ENCODE measurements at regions of chr3 and their contacts with region 1.

Region 1: DNA sequence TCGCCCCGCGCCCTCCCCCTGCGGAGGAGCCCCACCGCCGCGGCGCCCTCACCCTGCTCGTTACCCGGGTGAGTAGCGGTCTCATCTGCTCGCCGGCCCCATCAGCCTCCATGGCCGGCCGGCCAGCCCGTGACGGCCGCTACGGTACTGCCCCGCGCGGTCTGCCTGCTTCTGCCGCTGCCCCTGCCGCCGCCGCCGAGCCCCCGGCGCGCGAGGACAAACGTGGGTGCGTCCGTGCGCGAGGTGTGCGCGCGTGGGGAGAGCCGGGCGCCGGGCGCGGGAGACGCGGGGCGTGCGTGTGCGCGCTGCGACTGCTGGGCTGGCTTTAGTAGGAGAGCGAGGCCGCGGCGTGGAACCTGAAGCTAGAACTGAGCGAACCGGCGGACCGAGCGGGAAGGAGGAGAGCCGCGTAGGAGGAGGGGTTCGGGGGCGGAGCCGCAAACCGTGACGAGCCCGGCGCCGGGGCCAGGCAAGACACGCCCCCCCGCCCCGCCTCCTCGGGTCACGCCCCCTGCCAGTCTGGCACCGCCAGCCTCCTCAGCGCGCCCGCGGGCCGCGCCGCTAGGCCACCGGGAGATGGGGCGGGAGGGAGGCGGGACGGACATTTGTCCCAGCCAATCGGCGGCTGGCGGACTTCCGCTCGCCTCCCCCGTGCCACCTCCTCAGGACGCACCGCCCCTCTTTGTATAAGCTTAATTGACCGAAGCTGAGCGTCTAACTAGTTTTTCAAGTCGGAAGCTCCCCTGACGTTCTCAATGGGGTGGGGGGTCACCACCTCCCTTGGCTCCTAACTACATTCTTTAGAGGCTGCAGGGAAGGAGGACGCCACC is at the start of gene SLC4A7:
- DNase-seq: peak; percentile 99
- ATAC-seq: peak; percentile 89
- H3K4me3 Mint-ChIP-seq: peak within 1 kb of the TSS; percentile 99
- H3K27ac Mint-ChIP-seq: peak within 1 kb of the TSS; percentile 97
- H3K4me1 Mint-ChIP-seq: peaks cover 42% of the 10 kb centered on the region
- H3K27me3 Mint-ChIP-seq: no peaks in the 10 kb centered on the region
- CTCF ChIP-seq: no peak
- total RNA-seq, gene SLC4A7: 24.3 and 31.3 TPM in 2 replicates

Region 2: GRCh38 chr3:27302891-27303290 is 181.3 kb before region 1 on chr3:
- CTCF ChIA-PET with region 1: no interaction called
- POLR2A ChIA-PET with region 1: no interaction called
- intact Hi-C with region 1: no loop called
- DNase-seq: no peak
- ATAC-seq: no peak
- H3K4me3 Mint-ChIP-seq: no peak overlapping the region
- H3K27ac Mint-ChIP-seq: no peak overlapping the region
- H3K4me1 Mint-ChIP-seq: no peaks in the 10 kb centered on the region
- H3K27me3 Mint-ChIP-seq: no peaks in the 10 kb centered on the region
- CTCF ChIP-seq: no peak

Region 3: DNA sequence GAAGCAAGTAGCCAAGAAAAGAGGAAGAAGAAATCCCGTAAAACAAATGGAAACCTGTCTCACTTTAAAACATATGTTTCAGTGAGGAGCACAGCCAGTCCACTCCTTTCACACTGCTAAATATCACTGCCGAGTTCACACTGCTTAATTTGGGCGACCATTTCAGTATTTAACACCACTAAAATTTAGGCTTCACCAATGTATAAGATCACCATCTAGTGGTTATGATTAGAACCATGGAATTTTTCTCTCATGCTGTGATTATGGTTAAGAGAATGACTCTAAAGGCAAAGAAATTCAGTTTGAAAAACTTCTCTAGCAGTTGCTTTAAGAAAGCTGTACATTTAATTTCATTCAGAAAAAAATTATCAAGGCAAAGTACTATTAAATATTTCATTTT is 16.7 kb before region 1 on chr3:
- CTCF ChIA-PET with region 1: interaction called, 7 read pairs
- POLR2A ChIA-PET with region 1: interaction called, 7 read pairs
- intact Hi-C with region 1: loop called (anchors 1 kb)
- DNase-seq: no peak
- ATAC-seq: peak; percentile 88
- H3K4me3 Mint-ChIP-seq: no peak overlapping the region
- H3K27ac Mint-ChIP-seq: no peak overlapping the region
- H3K4me1 Mint-ChIP-seq: peaks cover 22% of the 10 kb centered on the region
- H3K27me3 Mint-ChIP-seq: no peaks in the 10 kb centered on the region
- CTCF ChIP-seq: no peak

Region 4: GRCh38 chr3:27503526-27503925 is 19.3 kb after region 1 on chr3:
- CTCF ChIA-PET with region 1: no interaction called
- POLR2A ChIA-PET with region 1: no interaction called
- intact Hi-C with region 1: no loop called
- DNase-seq: no peak
- ATAC-seq: no peak
- H3K4me3 Mint-ChIP-seq: no peak overlapping the region
- H3K27ac Mint-ChIP-seq: no peak overlapping the region
- H3K4me1 Mint-ChIP-seq: no peaks in the 10 kb centered on the region
- H3K27me3 Mint-ChIP-seq: no peaks in the 10 kb centered on the region
- CTCF ChIP-seq: no peak

Region 5: GRCh38 chr3:27528791-27529190 is 44.6 kb after region 1 on chr3:
- CTCF ChIA-PET with region 1: no interaction called
- POLR2A ChIA-PET with region 1: no interaction called
- intact Hi-C with region 1: no loop called
- DNase-seq: no peak
- ATAC-seq: no peak
- H3K4me3 Mint-ChIP-seq: no peak overlapping the region
- H3K27ac Mint-ChIP-seq: no peak overlapping the region
- H3K4me1 Mint-ChIP-seq: peaks cover 11% of the 10 kb centered on the region
- H3K27me3 Mint-ChIP-seq: no peaks in the 10 kb centered on the region
- CTCF ChIP-seq: no peak

Region 6: DNA sequence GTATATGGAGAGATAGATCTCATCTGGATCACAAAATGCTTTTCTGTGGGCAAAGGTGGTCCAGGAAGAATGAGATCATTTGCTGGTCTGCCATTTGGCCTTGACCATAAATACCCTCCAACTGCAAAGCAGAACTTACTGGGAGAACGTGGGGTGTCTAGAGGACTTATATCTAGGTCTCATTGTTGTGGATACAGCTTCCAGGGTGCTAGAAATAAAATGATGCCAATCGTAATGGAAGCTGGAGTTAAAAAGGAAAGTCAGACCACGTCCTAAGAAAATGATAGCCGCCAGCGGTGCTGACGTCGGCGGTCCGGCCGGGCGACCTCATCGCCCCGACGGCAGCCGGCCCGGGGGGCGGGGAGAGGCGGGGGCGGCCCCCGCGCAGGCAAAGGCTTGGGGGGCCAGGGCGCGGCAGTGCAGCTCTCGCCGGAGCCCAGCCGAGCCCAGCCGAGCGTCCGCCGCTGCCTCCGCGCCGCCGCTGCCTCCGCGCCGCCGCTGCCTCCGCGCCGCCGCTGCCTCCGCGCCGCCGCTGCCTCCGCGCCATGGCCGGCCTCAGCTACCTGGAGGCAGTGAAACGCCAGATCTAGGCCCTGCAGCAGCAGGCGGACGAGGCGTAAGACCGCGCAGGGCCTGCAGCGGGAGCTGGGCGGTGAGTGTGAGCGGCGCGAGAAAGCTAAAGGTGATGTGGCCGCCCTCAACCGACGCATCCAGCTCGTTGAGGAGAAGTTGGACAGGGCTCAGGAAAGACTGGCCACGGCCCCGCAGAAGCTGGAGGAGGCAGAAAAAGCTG is 148.4 kb after region 1 on chr3:
- CTCF ChIA-PET with region 1: no interaction called
- POLR2A ChIA-PET with region 1: interaction called, 3 read pairs
- intact Hi-C with region 1: loop called (anchors 2 kb)
- DNase-seq: peak; percentile 46
- ATAC-seq: peak; percentile 82
- H3K4me3 Mint-ChIP-seq: peak overlapping the region; percentile 90
- H3K27ac Mint-ChIP-seq: peak overlapping the region; percentile 78
- H3K4me1 Mint-ChIP-seq: peaks cover 17% of the 10 kb centered on the region
- H3K27me3 Mint-ChIP-seq: no peaks in the 10 kb centered on the region
- CTCF ChIP-seq: no peak

Region 7: DNA sequence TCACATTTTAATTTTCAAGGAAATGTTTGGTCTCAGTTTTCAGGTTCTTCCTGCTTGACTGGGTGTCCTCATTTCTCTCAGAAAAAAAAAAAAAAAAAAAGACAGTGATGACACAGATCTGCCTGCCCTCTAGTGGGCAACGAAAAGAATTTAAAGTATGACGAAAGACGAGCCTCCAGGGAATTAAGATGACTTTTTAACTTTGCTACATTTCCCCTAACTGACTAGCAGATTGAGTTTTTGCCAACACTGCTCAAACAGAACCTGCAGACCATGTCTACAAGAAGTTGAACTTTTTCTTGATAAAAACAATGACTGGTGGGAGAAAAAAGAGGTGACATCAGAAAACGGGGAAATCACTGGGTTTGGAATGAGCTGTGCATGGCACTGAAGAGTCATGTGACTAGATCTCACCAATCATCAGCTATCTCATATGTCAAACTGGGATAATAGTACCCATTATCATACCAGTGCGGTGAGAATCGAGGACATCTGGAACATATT is 197.1 kb after region 1 on chr3:
- CTCF ChIA-PET with region 1: no interaction called
- POLR2A ChIA-PET with region 1: no interaction called
- intact Hi-C with region 1: loop called (anchors 1 kb)
- DNase-seq: no peak
- ATAC-seq: peak; percentile 85
- H3K4me3 Mint-ChIP-seq: peak overlapping the region; percentile 55
- H3K27ac Mint-ChIP-seq: peak overlapping the region; percentile 36
- H3K4me1 Mint-ChIP-seq: peaks cover 19% of the 10 kb centered on the region
- H3K27me3 Mint-ChIP-seq: peaks cover 3% of the 10 kb centered on the region
- CTCF ChIP-seq: no peak

Region 8: DNA sequence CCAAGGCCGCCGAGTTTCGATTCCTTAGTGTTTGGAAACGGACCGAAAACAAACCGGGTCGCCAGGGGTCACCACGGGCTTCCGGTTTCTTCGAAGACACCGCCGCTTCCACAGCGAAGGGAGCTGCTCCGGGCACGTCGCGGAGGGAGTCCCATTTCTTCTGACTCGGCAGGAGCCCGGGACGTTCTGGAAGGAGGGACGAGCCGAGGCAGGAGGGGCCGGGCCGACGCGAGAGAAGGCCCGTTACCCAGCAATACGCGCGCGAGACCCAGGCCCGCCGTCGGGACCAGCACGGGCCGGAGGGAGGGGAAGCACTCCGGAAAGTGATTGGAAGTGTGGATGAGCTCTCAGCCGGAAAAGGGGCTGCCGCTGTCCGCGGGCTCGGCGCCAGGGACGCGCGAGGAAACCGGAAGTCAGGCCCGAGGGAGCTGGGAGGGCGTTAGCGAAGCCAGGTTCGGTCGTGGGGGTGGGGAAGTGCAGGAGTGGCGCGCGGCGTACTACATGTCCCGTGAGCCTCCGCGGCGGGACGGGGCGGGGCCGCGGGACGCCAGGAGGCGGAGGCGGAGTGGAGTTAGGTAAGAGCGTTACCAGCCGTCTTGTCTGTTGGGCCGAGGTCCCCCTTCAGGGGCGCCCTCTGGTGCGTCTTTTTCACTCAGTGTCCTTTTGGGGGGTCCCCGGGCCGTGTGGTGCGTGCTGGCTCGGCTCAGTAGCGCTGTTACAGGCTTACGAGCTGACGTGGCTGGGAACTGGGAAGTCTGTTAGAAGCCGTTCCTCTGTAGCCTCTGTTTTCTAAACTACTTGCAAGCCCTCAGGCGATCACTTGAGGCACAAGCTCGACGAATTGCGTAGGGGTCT is 864.6 kb after region 1 on chr3 and contains the starts of genes AZI2 and ZCWPW2:
- CTCF ChIA-PET with region 1: no interaction called
- POLR2A ChIA-PET with region 1: interaction called, 6 read pairs
- intact Hi-C with region 1: loop called (anchors 1 kb)
- DNase-seq: peak; percentile 93
- ATAC-seq: peak; percentile 89
- H3K4me3 Mint-ChIP-seq: peak within 1 kb of the TSS; percentile 97
- H3K27ac Mint-ChIP-seq: peak within 1 kb of the TSS; percentile 97
- H3K4me1 Mint-ChIP-seq: peaks cover 43% of the 10 kb centered on the region
- H3K27me3 Mint-ChIP-seq: no peaks in the 10 kb centered on the region
- CTCF ChIP-seq: no peak
- total RNA-seq, gene AZI2: 20.8 and 21.8 TPM in 2 replicates
- total RNA-seq, gene ZCWPW2: not detected in 2 replicates

Measured in activated B cell treated with CpG ODN at 0.5 μM for 24 hours (primary cell).